ENCODE measurements at regions of chr9 and their contacts with region 1.

Region 1: GRCh38 chr9:14768405-14769229 is 46.1 kb upstream of the CER1 start:
- DNase-seq: peak; percentile 21
- H3K4me3 ChIP-seq: no peak overlapping the region
- H3K27ac ChIP-seq: no peak overlapping the region
- H3K27me3 ChIP-seq: no peaks in the 10 kb centered on the region
- CTCF ChIP-seq: peak; percentile 78

Region 2: DNA sequence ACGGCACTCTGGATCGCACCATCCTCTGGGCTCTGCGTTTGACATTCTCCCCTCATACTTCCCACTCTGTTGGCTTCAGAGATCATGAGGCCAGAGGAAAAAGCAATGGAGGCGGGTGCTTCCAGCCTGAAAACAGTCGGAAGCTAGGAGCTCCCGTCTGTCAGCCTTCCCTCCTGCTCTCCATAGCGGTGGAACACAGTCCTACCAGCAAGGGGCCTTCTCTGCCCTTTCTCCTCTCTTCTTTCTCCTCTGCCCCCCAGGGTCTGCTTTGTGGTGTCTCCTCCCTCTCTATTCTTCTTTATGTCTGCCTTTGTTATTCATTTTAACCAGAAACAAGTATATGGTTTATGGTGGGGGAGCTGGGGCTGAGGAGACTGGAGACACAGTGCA is 302.2 kb before region 1 on chr9:
- CTCF ChIA-PET with region 1: interaction called, 22 read pairs
- POLR2A ChIA-PET with region 1: no interaction called
- DNase-seq: no peak
- H3K4me3 ChIP-seq: no peak overlapping the region
- H3K27ac ChIP-seq: no peak overlapping the region
- H3K27me3 ChIP-seq: peaks cover 2% of the 10 kb centered on the region
- CTCF ChIP-seq: no peak

Region 3: DNA sequence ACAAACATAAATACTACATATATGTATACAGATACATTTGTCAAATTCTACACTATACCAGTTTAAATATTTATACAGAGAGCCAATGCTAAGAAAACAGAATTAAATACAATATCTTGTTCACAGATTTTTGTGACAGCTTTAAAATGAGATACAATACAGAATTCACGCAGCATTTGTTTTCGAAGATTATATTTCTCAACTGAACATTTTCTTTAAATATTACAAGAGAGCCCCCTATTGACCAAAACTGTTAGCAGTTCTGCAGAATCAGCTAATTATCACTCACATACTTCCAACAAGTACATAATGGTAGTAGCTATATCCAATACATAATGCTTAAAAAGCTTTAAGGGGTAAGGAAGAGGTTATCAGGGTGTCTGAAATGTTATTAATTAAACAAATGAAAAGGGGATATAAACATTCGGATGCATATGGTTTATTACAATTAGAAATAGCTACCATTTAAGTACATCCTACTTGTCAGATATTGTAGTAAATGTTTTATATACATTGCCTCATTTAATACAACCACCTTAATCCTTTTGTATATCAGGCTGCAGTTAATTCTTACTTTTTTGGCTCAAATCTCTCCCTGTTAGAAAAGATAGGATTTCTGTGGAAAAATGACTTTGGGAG is 107.1 kb before region 1 on chr9:
- CTCF ChIA-PET with region 1: interaction called, 11 read pairs
- POLR2A ChIA-PET with region 1: no interaction called
- DNase-seq: peak; percentile 4
- H3K4me3 ChIP-seq: no peak overlapping the region
- H3K27ac ChIP-seq: no peak overlapping the region
- H3K27me3 ChIP-seq: no peaks in the 10 kb centered on the region
- CTCF ChIP-seq: peak; percentile 65

Region 4: DNA sequence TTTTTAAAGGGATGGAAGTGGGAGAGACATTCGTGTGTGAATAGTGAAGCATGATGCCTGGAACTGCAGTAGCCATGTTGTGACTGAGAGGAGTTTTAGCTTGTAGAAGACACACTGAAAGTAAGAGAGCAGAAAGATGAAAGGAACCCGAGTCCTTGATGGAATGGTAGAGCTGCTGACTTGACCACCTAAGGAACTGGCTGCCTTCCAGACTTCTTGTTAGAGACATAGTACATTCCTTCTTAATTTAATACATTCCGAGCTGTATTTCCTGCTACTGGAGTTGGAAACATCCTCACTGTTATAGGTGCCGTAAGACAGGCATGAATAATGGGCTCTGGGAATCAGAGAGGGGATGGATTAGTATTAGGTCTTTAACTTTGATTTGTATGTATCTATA is 53.5 kb before region 1 on chr9:
- CTCF ChIA-PET with region 1: no interaction called
- POLR2A ChIA-PET with region 1: no interaction called
- DNase-seq: no peak
- H3K4me3 ChIP-seq: no peak overlapping the region
- H3K27ac ChIP-seq: no peak overlapping the region
- H3K27me3 ChIP-seq: peaks cover 4% of the 10 kb centered on the region
- CTCF ChIP-seq: no peak

Region 5: DNA sequence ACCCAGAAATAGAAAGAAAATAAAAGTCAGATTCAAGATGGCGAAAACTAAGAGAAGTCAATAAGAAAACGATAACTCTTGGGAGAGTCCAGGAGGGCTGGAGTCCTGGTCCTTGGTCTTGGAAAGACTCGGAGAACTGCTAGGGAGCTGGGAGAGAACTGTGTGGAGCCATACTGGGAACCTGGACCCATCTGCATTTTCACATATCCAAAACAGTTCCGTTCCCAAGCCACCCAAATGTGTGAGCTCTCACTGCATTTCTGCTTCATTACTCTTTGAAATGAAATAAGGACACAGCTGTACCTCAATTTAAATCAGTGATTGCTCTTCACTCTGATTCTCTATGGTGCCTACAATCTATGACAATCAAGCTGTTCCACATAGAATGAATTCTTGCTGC is 22.0 kb after region 1 on chr9:
- CTCF ChIA-PET with region 1: no interaction called
- POLR2A ChIA-PET with region 1: no interaction called
- DNase-seq: no peak
- H3K4me3 ChIP-seq: no peak overlapping the region
- H3K27ac ChIP-seq: no peak overlapping the region
- H3K27me3 ChIP-seq: no peaks in the 10 kb centered on the region
- CTCF ChIP-seq: no peak